Ovary (tissue), 10 donors: ENCODE measurements at regions of chr10 and their contacts with region 1.

Region 1: GRCh38 chr10:107790271-107790670 is 625.8 kb upstream of the SORCS1 start:
- DNase-seq: no peak
- H3K4me3 ChIP-seq: no peak overlapping the region
- H3K27ac ChIP-seq: no peak overlapping the region
- H3K4me1 ChIP-seq: no peaks in the 10 kb centered on the region
- H3K27me3 ChIP-seq: no peaks in the 10 kb centered on the region
- CTCF ChIP-seq: no peak
- EP300 ChIP-seq: no peak
- POLR2A ChIP-seq: no peak

Region 2: DNA sequence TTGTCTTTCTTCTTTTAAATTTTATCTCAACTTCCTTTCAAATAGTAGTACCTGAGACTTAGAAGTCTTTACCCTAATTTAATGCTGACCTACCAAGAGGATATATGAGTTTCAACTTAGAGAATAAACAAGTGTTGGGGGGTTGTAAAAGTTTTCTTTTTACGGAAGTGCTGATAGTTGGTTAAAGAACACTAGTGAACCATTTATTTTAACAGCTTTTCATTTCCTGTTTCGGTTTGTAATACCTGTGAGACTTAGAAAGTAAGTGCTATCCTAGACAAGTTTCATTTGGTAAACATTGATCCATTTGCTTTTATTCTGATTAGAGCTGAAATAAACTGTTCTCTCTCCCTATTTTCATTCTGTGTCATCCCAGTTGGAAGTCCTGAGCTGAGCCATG is 57.3 kb after region 1 on chr10:
- intact Hi-C with region 1: loop called in 1 of 4 experiments (anchors 2 kb)
- DNase-seq: no peak
- H3K4me3 ChIP-seq: no peak overlapping the region
- H3K27ac ChIP-seq: no peak overlapping the region
- H3K4me1 ChIP-seq: no peaks in the 10 kb centered on the region
- H3K27me3 ChIP-seq: no peaks in the 10 kb centered on the region
- CTCF ChIP-seq: no peak
- EP300 ChIP-seq: no peak
- POLR2A ChIP-seq: no peak